ENCODE measurements at regions of chr5 and their contacts with region 1.

Region 1: GRCh38 chr5:176537608-176538504 is 654 bp upstream of the RNF44 start:
- DNase-seq: peak; percentile 99
- H3K4me3 Mint-ChIP-seq: peak overlapping the region; percentile 92
- H3K27ac Mint-ChIP-seq: peak overlapping the region; percentile 97
- H3K4me1 Mint-ChIP-seq: peaks cover 61% of the 10 kb centered on the region
- H3K27me3 Mint-ChIP-seq: no peaks in the 10 kb centered on the region

Region 2: DNA sequence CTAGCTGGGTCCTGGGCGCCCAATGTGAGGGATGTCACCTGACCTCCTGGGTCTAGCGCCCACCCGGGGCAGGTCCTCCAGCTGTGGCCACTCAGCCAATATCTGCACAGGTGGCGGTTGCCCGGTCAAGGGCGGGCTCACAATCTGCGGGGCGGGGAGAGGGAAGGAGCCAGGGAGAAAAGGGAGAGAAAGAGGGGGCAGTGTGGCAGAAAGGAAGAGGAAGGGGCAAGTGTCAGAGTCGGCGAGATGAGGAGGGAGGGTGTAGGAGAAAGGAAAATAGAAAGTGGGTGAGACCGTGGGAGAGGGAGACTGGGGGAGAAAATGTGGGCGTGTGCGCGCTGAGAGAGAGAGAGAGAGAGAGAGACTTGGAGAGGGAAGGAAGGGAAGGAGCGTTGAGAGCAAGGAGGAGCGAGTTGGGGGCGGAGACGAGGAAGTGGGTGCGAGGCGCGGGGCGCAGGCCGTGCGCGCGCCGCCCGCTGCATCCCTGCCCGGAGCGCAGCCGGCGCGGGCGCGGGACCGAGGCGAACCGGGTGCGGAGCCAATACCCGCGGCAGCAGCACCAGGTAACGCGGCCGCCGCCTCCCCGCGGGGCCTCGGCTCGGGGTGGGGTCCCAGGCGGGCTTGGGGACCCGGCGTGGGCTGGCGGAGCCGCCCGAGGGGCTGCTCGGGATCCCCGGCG is 880.1 kb before region 1 on chr5 and contains the start of gene HRH2:
- CTCF ChIA-PET with region 1: no interaction called
- POLR2A ChIA-PET with region 1: no interaction called
- intact Hi-C with region 1: loop called (anchors 10 kb)
- DNase-seq: peak; percentile 72
- H3K4me3 Mint-ChIP-seq: peak within 1 kb of the TSS; percentile 87
- H3K27ac Mint-ChIP-seq: peak within 1 kb of the TSS; percentile 75
- H3K4me1 Mint-ChIP-seq: peaks cover 77% of the 10 kb centered on the region
- H3K27me3 Mint-ChIP-seq: no peaks in the 10 kb centered on the region
- total RNA-seq, gene HRH2: 11.6 to 11.8 TPM

Region 3: DNA sequence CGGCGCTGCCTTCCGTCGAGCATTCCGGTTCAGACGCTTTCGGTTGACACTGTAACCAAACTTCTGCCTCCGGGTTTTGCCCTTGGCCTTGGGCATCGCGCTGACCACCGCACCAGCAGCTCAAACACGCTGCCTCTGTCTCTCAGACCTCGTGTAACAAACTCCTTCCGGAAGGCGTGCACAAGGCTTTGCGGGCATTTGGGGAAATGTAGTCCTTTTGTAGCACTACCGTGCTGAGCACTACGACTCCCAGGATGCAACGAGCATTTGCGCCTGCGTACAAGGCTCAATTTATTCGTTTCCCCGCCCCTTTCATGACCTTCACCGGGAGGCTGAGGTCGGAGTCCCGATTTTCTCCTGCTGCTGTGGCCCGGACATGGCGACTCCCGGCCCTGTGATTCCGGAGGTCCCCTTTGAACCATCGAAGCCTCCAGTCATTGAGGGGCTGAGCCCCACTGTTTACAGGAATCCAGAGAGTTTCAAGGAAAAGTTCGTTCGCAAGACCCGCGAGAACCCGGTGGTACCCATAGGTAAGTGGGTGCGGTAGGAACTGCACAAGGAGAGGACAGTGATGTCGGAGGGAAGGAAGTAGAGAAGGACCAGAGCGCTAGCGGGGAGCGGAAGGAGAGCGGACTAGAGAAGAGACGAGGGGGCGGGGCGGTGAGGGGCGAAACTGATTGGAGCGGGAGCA is 149.3 kb before region 1 on chr5 and contains the starts of genes HIGD2A and NOP16:
- CTCF ChIA-PET with region 1: no interaction called
- POLR2A ChIA-PET with region 1: interaction called, 7 read pairs
- intact Hi-C with region 1: loop called (anchors 1 kb)
- DNase-seq: peak; percentile 100
- H3K4me3 Mint-ChIP-seq: peak within 1 kb of the TSS; percentile 99
- H3K27ac Mint-ChIP-seq: peak within 1 kb of the TSS; percentile 98
- H3K4me1 Mint-ChIP-seq: peaks cover 27% of the 10 kb centered on the region
- H3K27me3 Mint-ChIP-seq: no peaks in the 10 kb centered on the region
- total RNA-seq, gene HIGD2A: 112 to 119 TPM
- total RNA-seq, gene NOP16: 52.5 to 57.6 TPM

Region 4: GRCh38 chr5:176447982-176448608 is 89.8 kb before region 1 on chr5 and contains the start of gene FAF2:
- CTCF ChIA-PET with region 1: interaction called, 33 read pairs
- POLR2A ChIA-PET with region 1: interaction called, 13 read pairs
- intact Hi-C with region 1: loop called (anchors 1 kb)
- DNase-seq: peak; percentile 99
- H3K4me3 Mint-ChIP-seq: peak within 1 kb of the TSS; percentile 97
- H3K27ac Mint-ChIP-seq: peak within 1 kb of the TSS; percentile 98
- H3K4me1 Mint-ChIP-seq: peaks cover 25% of the 10 kb centered on the region
- H3K27me3 Mint-ChIP-seq: no peaks in the 10 kb centered on the region
- total RNA-seq, gene FAF2: 34.4 to 34.6 TPM

Region 5: GRCh38 chr5:176514244-176514950 is 23.5 kb before region 1 on chr5:
- CTCF ChIA-PET with region 1: no interaction called
- POLR2A ChIA-PET with region 1: no interaction called
- intact Hi-C with region 1: no loop called
- DNase-seq: no peak
- H3K4me3 Mint-ChIP-seq: no peak overlapping the region
- H3K27ac Mint-ChIP-seq: no peak overlapping the region
- H3K4me1 Mint-ChIP-seq: peaks cover 12% of the 10 kb centered on the region
- H3K27me3 Mint-ChIP-seq: no peaks in the 10 kb centered on the region

Region 6: DNA sequence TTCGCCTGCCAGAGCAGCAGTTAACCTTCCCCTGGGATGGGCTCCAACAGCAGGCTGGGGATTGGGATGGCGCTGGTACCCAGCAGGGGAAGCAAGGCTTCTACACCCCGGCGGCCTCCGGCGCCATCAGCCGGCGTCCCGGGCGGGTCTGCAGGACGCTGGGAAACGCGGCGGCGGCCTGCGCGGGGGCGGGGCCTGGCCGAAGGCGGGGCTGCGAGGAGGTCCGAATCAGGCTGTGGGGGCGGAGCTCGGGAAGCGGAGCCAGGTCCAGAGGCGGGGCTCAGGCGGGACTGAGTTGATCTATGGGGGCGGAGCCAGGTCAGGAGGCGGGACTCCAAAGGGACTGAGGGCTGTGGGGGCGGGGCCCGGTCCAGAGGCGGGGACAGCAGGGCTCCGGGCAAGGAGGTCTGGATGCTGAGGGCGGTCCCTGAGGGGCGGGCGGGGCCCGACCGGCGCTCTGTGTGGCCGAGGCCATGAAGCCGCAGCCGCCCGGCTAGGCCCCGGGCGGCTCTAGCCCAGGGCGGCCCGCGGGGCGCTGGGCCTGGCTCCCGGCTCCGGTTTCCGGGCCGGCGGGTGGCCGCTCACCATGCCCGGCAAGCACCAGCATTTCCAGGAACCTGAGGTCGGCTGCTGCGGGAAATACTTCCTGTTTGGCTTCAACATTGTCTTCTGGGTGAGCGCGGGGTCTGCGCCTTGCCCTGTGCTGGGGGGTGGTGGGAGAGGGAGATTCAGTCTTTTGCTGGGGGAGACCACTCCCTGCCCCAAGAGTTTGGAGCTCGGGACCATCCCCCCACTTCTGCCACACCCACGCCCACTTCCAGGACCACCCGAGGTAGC is 109.4 kb after region 1 on chr5 and contains the start of gene TSPAN17:
- CTCF ChIA-PET with region 1: no interaction called
- POLR2A ChIA-PET with region 1: interaction called, 3 read pairs
- intact Hi-C with region 1: loop called (anchors 1 kb)
- DNase-seq: peak; percentile 100
- H3K4me3 Mint-ChIP-seq: peak within 1 kb of the TSS; percentile 86
- H3K27ac Mint-ChIP-seq: peak within 1 kb of the TSS; percentile 85
- H3K4me1 Mint-ChIP-seq: peaks cover 48% of the 10 kb centered on the region
- H3K27me3 Mint-ChIP-seq: no peaks in the 10 kb centered on the region
- total RNA-seq, gene TSPAN17: 25.2 to 25.3 TPM

Region 7: DNA sequence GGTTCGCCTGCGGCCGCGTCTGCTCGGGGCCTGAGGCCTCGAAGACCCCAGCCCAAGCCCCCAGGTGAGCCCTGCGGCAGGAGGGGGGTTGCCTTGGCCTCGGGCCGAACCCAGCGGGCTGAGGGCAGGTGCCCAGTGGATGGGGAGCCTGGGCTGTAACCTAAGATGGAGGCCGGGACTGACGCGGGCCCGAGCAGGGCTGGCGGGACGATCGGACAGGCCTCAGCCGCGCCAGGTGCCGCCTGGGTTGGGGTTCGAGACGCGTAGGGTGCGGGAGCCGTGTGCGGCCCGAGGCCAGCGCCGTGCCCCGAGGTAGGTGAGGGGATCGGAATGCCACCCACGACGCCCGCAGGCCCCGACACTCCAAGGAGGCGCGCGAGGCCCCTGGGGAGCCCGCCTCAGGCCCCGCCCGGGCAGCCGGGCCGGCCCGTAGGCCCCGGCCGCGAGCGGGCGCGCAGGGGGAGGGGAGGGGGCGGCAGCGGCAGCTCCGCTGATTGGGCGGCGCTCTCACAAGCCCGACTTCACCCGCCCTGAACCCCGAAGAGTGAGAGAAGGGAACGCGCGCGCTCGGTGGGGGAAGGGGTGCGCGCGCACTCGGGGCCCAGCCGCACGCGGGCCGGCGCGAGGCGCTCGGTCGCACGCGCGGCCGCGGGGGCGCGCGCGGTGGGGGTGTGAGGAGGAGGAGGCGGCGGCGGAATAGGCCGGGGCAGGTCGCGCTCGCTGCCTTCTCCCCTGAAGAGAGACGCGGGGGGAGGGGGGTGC is 595.4 kb after region 1 on chr5 and contains the start of gene NSD1:
- CTCF ChIA-PET with region 1: no interaction called
- POLR2A ChIA-PET with region 1: no interaction called
- intact Hi-C with region 1: loop called (anchors 5 kb)
- DNase-seq: peak; percentile 93
- H3K4me3 Mint-ChIP-seq: peak within 1 kb of the TSS; percentile 90
- H3K27ac Mint-ChIP-seq: peak within 1 kb of the TSS; percentile 89
- H3K4me1 Mint-ChIP-seq: peaks cover 46% of the 10 kb centered on the region
- H3K27me3 Mint-ChIP-seq: no peaks in the 10 kb centered on the region
- total RNA-seq, gene NSD1: 54.6 to 55.5 TPM